PC-9 (cell line): ENCODE measurements at regions of chr2 and their contacts with region 1.

Region 1: GRCh38 chr2:231124838-231125568 is at the start of gene HTR2B:
- DNase-seq: no peak
- H3K4me3 ChIP-seq: no peak within 1 kb of the TSS
- H3K27ac ChIP-seq: 0 out of 2 replicates have a peak within 1 kb of the TSS, but pooled peaks have one; percentile 6
- H3K4me1 ChIP-seq: peaks cover 18% of the 10 kb centered on the region
- H3K27me3 ChIP-seq: no peaks in the 10 kb centered on the region
- CTCF ChIP-seq: no peak
- total RNA-seq, gene HTR2B: not detected in 2 replicates

Region 2: DNA sequence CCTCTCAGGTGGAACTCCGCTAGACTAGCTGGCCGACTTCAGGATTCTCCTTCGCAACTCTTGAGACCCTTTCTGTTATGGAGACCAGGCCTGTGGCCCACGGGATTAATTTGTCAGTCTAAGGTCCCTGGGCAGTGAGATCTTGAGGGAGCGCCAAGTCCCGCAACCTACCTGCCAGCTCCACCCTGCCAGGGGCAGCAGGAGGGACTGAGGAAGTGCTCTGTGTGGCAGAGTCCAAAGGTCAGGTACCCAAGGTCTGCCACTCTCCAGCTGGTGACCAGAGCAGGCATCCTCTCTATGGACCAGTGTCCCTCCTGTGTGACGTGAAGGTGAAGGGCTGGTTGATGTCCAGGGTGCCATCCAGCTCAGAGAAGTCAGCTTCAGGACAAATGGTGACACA is 133.4 kb before region 1 on chr2:
- CTCF ChIA-PET with region 1: no interaction called
- POLR2A ChIA-PET with region 1: no interaction called
- intact Hi-C with region 1: no loop called
- DNase-seq: no peak
- H3K4me3 ChIP-seq: no peak overlapping the region
- H3K27ac ChIP-seq: no peak overlapping the region
- H3K4me1 ChIP-seq: peaks cover 3% of the 10 kb centered on the region; the same call in 1 of the 2 replicates
- H3K27me3 ChIP-seq: peaks cover 29% of the 10 kb centered on the region
- CTCF ChIP-seq: no peak

Region 3: GRCh38 chr2:231111987-231112386 is 13.0 kb before region 1 on chr2:
- CTCF ChIA-PET with region 1: interaction called, 3 read pairs
- POLR2A ChIA-PET with region 1: interaction called, 10 read pairs
- intact Hi-C with region 1: no loop called
- DNase-seq: no peak
- H3K4me3 ChIP-seq: no peak overlapping the region
- H3K27ac ChIP-seq: no peak overlapping the region
- H3K4me1 ChIP-seq: no peaks in the 10 kb centered on the region
- H3K27me3 ChIP-seq: no peaks in the 10 kb centered on the region
- CTCF ChIP-seq: no peak

Region 4: GRCh38 chr2:231280846-231281245 is 155.8 kb after region 1 on chr2:
- CTCF ChIA-PET with region 1: no interaction called
- POLR2A ChIA-PET with region 1: no interaction called
- intact Hi-C with region 1: no loop called
- DNase-seq: no peak
- H3K4me3 ChIP-seq: no peak overlapping the region
- H3K27ac ChIP-seq: no peak overlapping the region
- H3K4me1 ChIP-seq: no peaks in the 10 kb centered on the region
- H3K27me3 ChIP-seq: no peaks in the 10 kb centered on the region
- CTCF ChIP-seq: no peak